ENCODE measurements at regions of chr11 and their contacts with region 1.

Region 1: GRCh38 chr11:14519917-14520746 is at the start of gene PSMA1:
- DNase-seq: peak; percentile 91
- H3K4me3 Mint-ChIP-seq: peak within 1 kb of the TSS; percentile 85
- H3K27ac Mint-ChIP-seq: peak within 1 kb of the TSS; percentile 93
- H3K4me1 Mint-ChIP-seq: peaks cover 16% of the 10 kb centered on the region
- H3K27me3 Mint-ChIP-seq: no peaks in the 10 kb centered on the region
- CTCF ChIP-seq: no peak
- total RNA-seq, gene PSMA1: 187 and 205 TPM in 2 replicates

Region 2: GRCh38 chr11:14336507-14337503 is 183.3 kb before region 1 on chr11:
- CTCF ChIA-PET with region 1: no interaction called
- intact Hi-C with region 1: no loop called
- DNase-seq: no peak
- H3K4me3 Mint-ChIP-seq: no peak overlapping the region
- H3K27ac Mint-ChIP-seq: peak overlapping the region; percentile 73
- H3K4me1 Mint-ChIP-seq: peaks cover 25% of the 10 kb centered on the region
- H3K27me3 Mint-ChIP-seq: no peaks in the 10 kb centered on the region
- CTCF ChIP-seq: no peak

Region 3: DNA sequence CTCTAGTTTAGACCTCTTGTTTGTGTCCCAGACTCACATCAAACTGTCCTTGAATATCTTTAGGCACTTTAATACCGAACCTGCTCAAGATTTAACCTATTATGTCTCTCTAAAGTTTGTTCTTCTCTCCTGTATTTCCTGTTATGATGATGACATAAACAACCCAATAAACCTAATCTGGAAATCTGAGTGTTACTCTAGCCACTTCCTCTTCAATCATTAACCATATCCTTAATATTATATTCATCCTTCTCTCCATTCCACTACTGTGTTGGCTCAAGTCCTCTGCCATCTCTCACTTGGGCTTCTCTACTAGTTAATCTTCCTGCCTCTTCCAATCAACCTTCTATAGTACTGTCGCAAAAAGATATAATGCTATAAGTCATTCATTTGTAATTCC is 56.5 kb before region 1 on chr11:
- CTCF ChIA-PET with region 1: no interaction called
- intact Hi-C with region 1: loop called (anchors 5 kb)
- DNase-seq: no peak
- H3K4me3 Mint-ChIP-seq: no peak overlapping the region
- H3K27ac Mint-ChIP-seq: no peak overlapping the region
- H3K4me1 Mint-ChIP-seq: no peaks in the 10 kb centered on the region
- H3K27me3 Mint-ChIP-seq: no peaks in the 10 kb centered on the region
- CTCF ChIP-seq: no peak